SK-N-SH (cell line): ENCODE measurements at regions of chr4 and their contacts with region 1.

Region 1: DNA sequence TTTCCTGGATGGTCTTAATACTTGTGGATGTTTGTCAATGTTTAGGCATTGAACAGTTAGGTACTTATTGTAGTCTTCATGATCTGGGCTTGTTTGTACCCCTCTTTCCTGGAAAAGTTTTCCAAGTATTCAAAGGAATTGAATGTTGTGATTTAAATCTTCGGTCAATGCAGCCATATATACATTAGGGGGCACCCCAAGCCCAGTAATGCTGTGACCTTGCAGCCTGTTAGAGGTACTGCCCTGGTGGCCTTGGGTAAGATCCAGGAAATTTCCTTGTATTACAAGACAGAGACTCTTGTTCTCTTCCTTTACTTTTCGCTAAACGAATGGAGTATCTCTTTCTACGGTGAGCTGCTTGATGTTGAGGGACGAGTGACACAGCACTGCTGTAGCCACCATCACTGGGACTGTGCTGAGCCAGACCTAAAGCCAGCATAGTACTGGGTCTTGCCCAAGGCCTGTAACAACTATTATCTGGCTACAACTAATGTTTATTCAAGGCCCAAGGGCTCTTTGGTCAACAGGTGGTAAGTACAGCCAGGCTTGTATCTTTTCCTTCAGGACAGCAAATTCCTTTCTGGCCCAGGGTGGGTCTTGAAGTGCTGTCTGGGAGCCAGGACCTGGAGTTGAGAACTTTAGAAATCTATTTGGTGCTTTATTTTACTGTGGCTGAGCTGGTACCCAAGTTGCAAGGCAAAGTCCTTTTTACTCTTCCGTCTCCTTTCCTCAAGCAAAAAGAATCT is 118.3 kb upstream of the ATOH1 start:
- DNase-seq: peak; percentile 10
- H3K4me3 ChIP-seq: no peak overlapping the region; a peak in 1 of 4 replicates
- H3K27ac ChIP-seq: no peak overlapping the region
- H3K4me1 ChIP-seq: no peaks in the 10 kb centered on the region; a peak in 1 of 4 replicates
- H3K27me3 ChIP-seq: no peaks in the 10 kb centered on the region
- CTCF ChIP-seq: peak; percentile 44
- EP300 ChIP-seq: no peak
- RAD21 ChIP-seq: peak; percentile 86

Region 2: GRCh38 chr4:93684571-93684970 is 25.7 kb before region 1 on chr4:
- CTCF ChIA-PET with region 1: no interaction called
- POLR2A ChIA-PET with region 1: no interaction called
- DNase-seq: no peak
- H3K4me3 ChIP-seq: no peak overlapping the region
- H3K27ac ChIP-seq: no peak overlapping the region
- H3K4me1 ChIP-seq: no peaks in the 10 kb centered on the region
- H3K27me3 ChIP-seq: no peaks in the 10 kb centered on the region
- CTCF ChIP-seq: no peak
- EP300 ChIP-seq: no peak
- RAD21 ChIP-seq: no peak

Region 3: DNA sequence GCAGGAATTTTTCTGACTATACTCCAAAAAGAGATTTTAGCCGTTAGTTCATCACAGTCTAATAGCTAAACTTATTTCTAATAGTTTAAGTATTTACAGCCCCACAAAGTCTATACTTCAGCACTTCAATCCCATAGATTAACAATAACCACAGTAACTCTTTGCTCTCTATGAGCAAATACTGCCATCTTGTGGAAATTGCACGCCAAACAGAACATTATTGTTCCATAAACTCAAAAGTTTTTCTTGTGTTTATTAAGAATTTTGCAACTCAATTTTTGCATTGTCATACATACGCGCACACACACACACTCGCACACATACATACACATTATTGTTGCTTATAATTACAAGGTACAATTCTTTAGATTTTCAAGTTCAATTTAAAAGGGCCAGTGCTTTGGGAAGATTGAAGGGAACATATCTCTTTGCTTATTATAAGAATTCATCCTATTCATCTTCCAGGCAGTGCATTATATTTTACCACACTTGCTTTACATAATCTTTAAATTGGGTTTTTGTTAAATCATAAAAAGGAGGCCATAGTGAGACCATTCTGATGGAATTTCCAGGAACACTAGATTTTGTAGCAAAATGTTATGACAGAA is 54.5 kb after region 1 on chr4:
- CTCF ChIA-PET with region 1: interaction called, 35 read pairs
- POLR2A ChIA-PET with region 1: no interaction called
- DNase-seq: peak; percentile 33
- H3K4me3 ChIP-seq: no peak overlapping the region
- H3K27ac ChIP-seq: no peak overlapping the region
- H3K4me1 ChIP-seq: peaks cover 0 to 4% of the 10 kb centered on the region in 2 experiments; a peak in 2 of 4 replicates
- H3K27me3 ChIP-seq: no peaks in the 10 kb centered on the region
- CTCF ChIP-seq: peak; percentile 95
- EP300 ChIP-seq: no peak
- RAD21 ChIP-seq: peak; percentile 96

Region 4: DNA sequence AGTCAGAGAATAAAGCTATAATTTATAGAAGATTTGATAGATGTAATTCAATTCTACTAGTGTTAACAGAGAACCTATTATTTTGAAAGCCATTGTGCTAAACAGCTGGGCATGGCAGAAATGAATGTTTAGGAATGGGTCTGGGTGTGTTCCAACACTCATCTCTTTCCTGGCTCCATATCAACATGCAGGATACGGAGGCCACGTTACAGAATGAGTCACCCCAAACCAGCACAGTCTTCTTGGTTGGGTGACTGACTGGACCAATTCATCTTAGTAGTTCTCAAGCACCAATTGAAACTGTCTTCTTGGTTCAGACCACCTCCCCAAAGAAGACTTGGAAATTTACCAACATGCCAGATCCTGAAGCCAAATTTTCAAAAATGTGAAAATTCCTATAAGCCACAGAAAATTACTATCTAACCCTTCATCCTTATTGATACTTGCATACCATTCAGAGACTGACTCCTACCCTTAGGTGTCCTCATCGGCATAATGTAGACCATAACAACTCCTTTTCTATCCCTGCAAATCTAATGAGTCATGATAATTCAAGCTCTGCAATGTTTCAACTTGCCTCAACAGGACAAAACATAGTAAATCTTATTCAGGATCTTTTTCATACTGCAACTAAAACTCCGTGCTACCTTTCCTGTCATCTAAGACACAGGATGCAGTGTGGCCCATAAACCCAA is 66.3 kb after region 1 on chr4:
- CTCF ChIA-PET with region 1: interaction called, 15 read pairs
- POLR2A ChIA-PET with region 1: no interaction called
- DNase-seq: no peak
- H3K4me3 ChIP-seq: no peak overlapping the region
- H3K27ac ChIP-seq: no peak overlapping the region
- H3K4me1 ChIP-seq: peaks cover 0 to 4% of the 10 kb centered on the region in 2 experiments; a peak in 2 of 4 replicates
- H3K27me3 ChIP-seq: no peaks in the 10 kb centered on the region
- CTCF ChIP-seq: no peak
- EP300 ChIP-seq: no peak
- RAD21 ChIP-seq: no peak